ENCODE measurements at regions of chr12 and their contacts with region 1.

Region 1: GRCh38 chr12:10364815-10365622 is 24.8 kb downstream of the KLRK1 start:
- DNase-seq: peak in 7 of 9 experiments; percentile 40 to 93 (median 70)
- ATAC-seq: peak; percentile 66
- H3K4me3 ChIP-seq: peak overlapping the region; percentile 60 to 77
- H3K4me3 Mint-ChIP-seq: no peak overlapping the region
- H3K27ac ChIP-seq: peak overlapping the region; percentile 71 to 86
- H3K27ac Mint-ChIP-seq: no peak overlapping the region
- H3K4me1 ChIP-seq: peaks cover 83% of the 10 kb centered on the region
- H3K4me1 Mint-ChIP-seq: peaks cover 36% of the 10 kb centered on the region
- H3K27me3 ChIP-seq: no peaks in the 10 kb centered on the region
- H3K27me3 Mint-ChIP-seq: no peaks in the 10 kb centered on the region
- CTCF ChIP-seq: no peak

Region 2: DNA sequence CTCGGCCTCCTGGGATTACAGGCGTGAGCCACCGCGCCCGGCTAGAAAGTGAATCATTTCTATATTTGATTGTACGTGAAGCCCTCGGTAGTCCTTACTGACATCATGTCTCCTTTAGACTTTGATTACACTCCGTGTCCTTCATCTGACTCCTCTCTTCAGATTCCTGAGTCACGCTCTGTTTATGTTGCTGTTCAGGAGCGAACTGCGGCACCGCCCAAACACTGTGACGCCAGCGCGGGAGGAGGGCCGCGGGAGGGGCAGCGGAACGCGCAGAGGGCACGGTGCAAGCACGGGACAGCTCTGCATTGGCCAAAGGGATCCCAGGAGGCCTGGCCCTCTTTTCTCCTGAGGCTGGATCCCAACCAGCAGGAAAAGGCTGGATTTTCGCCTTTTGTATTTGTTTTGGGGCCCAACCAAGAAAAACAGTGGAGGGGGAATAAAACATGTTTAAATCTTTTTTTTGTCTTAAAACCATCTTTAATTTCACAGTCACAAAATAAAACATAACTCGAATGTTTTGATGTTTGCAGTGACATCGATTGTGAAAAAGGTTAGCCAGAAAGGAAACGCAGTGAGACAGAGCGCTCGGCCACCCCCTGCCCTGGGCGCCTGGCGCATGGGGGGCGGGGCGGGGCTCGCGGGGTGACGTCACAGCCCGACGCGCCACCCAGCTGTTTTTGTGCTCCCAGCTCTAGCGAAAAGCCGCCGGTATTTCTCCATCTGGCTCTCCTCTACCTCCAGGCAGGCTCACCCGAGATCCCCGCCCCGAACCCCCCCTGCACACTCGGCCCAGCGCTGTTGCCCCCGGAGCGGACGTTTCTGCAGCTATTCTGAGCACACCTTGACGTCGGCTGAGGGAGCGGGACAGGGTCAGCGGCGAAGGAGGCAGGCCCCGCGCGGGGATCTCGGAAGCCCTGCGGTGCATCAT is 152.6 kb before region 1 on chr12 and contains the start of gene GABARAPL1:
- CTCF ChIA-PET with region 1: no interaction called
- POLR2A ChIA-PET with region 1: interaction called, 3 read pairs
- intact Hi-C with region 1: loop called in 1 of 2 experiments (anchors 5 kb)
- DNase-seq: peak; percentile 76 to 94 (median 88)
- ATAC-seq: peak; percentile 69
- H3K4me3 ChIP-seq: peak within 1 kb of the TSS; percentile 75 to 93
- H3K4me3 Mint-ChIP-seq: peak within 1 kb of the TSS; percentile 91
- H3K27ac ChIP-seq: peak within 1 kb of the TSS; percentile 93 to 98
- H3K27ac Mint-ChIP-seq: peak within 1 kb of the TSS; percentile 97
- H3K4me1 ChIP-seq: peaks cover 19% of the 10 kb centered on the region
- H3K4me1 Mint-ChIP-seq: peaks cover 28% of the 10 kb centered on the region
- H3K27me3 ChIP-seq: no peaks in the 10 kb centered on the region
- H3K27me3 Mint-ChIP-seq: no peaks in the 10 kb centered on the region
- CTCF ChIP-seq: no peak
- total RNA-seq, gene GABARAPL1: 377 to 380 TPM

Region 3: DNA sequence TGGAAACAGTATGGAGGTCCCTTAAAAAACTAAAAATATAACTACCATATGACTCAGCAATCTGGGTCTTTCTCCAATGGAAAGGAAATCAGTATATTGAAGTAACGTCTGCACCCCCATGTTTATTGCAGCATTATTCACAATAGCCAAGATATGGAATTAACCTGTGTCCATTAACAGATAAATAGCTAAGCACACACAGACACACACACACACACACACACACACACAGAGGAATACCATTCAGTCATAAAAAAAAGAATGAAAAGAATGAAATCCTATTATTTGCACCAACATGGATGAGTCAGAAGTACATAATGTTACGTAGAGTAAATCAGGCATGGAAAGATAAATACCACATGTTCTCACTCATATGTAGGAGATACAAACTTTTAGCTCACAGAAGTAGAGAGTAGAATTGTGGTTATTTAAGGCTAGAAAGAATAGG is 20.2 kb after region 1 on chr12:
- CTCF ChIA-PET with region 1: interaction called, 19 read pairs
- POLR2A ChIA-PET with region 1: interaction called, 43 read pairs
- intact Hi-C with region 1: loop called (anchors 2 kb)
- DNase-seq: peak in 1 of 9 experiments; percentile 57
- ATAC-seq: peak; percentile 57
- H3K4me3 ChIP-seq: peak overlapping the region; percentile 61 to 68
- H3K4me3 Mint-ChIP-seq: peak overlapping the region; percentile 87
- H3K27ac ChIP-seq: peak overlapping the region; percentile 50 to 97
- H3K27ac Mint-ChIP-seq: peak overlapping the region; percentile 92
- H3K4me1 ChIP-seq: peaks cover 25% of the 10 kb centered on the region
- H3K4me1 Mint-ChIP-seq: peaks cover 58% of the 10 kb centered on the region
- H3K27me3 ChIP-seq: no peaks in the 10 kb centered on the region
- H3K27me3 Mint-ChIP-seq: no peaks in the 10 kb centered on the region
- CTCF ChIP-seq: no peak

Region 4: DNA sequence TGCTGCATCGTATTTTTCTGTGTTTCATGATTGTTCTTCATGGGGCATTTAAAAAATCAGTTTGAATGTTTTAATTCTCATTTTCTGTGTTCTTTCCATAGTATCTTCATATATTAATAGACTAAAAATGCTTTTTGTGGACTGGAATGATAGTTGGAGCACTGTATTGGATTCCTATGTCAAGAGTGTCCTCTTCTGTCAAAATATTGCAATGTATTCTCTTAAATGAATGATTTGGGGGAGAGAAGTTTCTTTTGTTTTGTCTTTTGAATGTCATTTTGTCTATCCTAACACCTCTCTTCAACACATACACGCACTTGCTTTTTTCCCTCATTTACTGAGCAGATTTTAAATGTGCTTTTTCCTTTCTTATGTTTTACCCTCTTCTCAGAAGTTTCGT is 136.0 kb after region 1 on chr12:
- CTCF ChIA-PET with region 1: interaction called, 9 read pairs
- POLR2A ChIA-PET with region 1: interaction called, 3 read pairs
- intact Hi-C with region 1: loop called in 1 of 2 experiments (anchors 2 kb)
- DNase-seq: peak in 2 of 9 experiments; percentile 36 to 59
- ATAC-seq: no peak
- H3K4me3 ChIP-seq: no peak overlapping the region
- H3K4me3 Mint-ChIP-seq: peak overlapping the region; percentile 57
- H3K27ac ChIP-seq: no peak overlapping the region
- H3K27ac Mint-ChIP-seq: peak overlapping the region; percentile 82
- H3K4me1 ChIP-seq: peaks cover 56% of the 10 kb centered on the region
- H3K4me1 Mint-ChIP-seq: peaks cover 51% of the 10 kb centered on the region
- H3K27me3 ChIP-seq: no peaks in the 10 kb centered on the region
- H3K27me3 Mint-ChIP-seq: no peaks in the 10 kb centered on the region
- CTCF ChIP-seq: no peak

Region 5: GRCh38 chr12:10521555-10521954 is 156.5 kb after region 1 on chr12:
- CTCF ChIA-PET with region 1: no interaction called
- POLR2A ChIA-PET with region 1: no interaction called
- intact Hi-C with region 1: no loop called
- DNase-seq: no peak
- ATAC-seq: no peak
- H3K4me3 ChIP-seq: no peak overlapping the region
- H3K4me3 Mint-ChIP-seq: no peak overlapping the region
- H3K27ac ChIP-seq: no peak overlapping the region
- H3K27ac Mint-ChIP-seq: no peak overlapping the region
- H3K4me1 ChIP-seq: no peaks in the 10 kb centered on the region
- H3K4me1 Mint-ChIP-seq: peaks cover 11% of the 10 kb centered on the region
- H3K27me3 ChIP-seq: no peaks in the 10 kb centered on the region
- H3K27me3 Mint-ChIP-seq: no peaks in the 10 kb centered on the region
- CTCF ChIP-seq: no peak

Region 6: DNA sequence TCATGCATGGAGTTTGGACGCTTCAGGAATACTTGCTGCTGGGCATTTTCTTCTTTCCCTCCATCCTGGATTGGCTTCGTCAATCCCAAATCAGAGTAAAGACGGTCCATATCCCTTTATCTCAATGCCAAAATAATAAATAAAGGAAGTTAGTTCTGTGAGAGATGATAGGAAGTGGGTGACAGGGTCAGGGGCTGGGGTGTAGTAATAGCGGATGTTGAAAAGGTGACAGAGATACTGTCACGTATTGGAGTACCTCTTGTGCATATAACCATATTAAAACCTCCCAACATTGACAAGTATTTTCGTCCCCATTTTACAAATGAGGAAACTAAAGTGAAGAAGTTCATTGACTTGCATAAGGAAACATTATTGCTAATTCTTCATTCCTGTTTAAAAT is 236.0 kb after region 1 on chr12:
- CTCF ChIA-PET with region 1: no interaction called
- POLR2A ChIA-PET with region 1: no interaction called
- intact Hi-C with region 1: no loop called
- DNase-seq: peak in 2 of 9 experiments; percentile 24 to 66
- ATAC-seq: peak; percentile 56
- H3K4me3 ChIP-seq: peak overlapping the region in 1 of 2 experiments; percentile 23
- H3K4me3 Mint-ChIP-seq: peak overlapping the region; percentile 23
- H3K27ac ChIP-seq: peak overlapping the region in 1 of 2 experiments; percentile 63
- H3K27ac Mint-ChIP-seq: peak overlapping the region; percentile 58
- H3K4me1 ChIP-seq: no peaks in the 10 kb centered on the region
- H3K4me1 Mint-ChIP-seq: peaks cover 21% of the 10 kb centered on the region
- H3K27me3 ChIP-seq: no peaks in the 10 kb centered on the region
- H3K27me3 Mint-ChIP-seq: no peaks in the 10 kb centered on the region
- CTCF ChIP-seq: no peak

Region 7: GRCh38 chr12:10613349-10614055 is 248.5 kb after region 1 on chr12 and contains the start of gene MAGOHB:
- CTCF ChIA-PET with region 1: interaction called, 5 read pairs
- POLR2A ChIA-PET with region 1: interaction called, 3 read pairs
- intact Hi-C with region 1: loop called (anchors 1 to 5 kb)
- DNase-seq: peak; percentile 97 to 100 (median 99)
- ATAC-seq: peak; percentile 90
- H3K4me3 ChIP-seq: peak within 1 kb of the TSS; percentile 74 to 97
- H3K4me3 Mint-ChIP-seq: peak within 1 kb of the TSS; percentile 100
- H3K27ac ChIP-seq: peak within 1 kb of the TSS; percentile 91 to 99
- H3K27ac Mint-ChIP-seq: peak within 1 kb of the TSS; percentile 100
- H3K4me1 ChIP-seq: peaks cover 19% of the 10 kb centered on the region
- H3K4me1 Mint-ChIP-seq: peaks cover 33% of the 10 kb centered on the region
- H3K27me3 ChIP-seq: no peaks in the 10 kb centered on the region
- H3K27me3 Mint-ChIP-seq: no peaks in the 10 kb centered on the region
- CTCF ChIP-seq: no peak
- total RNA-seq, gene MAGOHB: 7.9 to 8.5 TPM

Region 8: GRCh38 chr12:10749700-10750384 is 384.8 kb after region 1 on chr12:
- CTCF ChIA-PET with region 1: no interaction called
- POLR2A ChIA-PET with region 1: no interaction called
- intact Hi-C with region 1: loop called in 1 of 2 experiments (anchors 2 kb)
- DNase-seq: peak; percentile 43 to 89 (median 71)
- ATAC-seq: peak; percentile 100
- H3K4me3 ChIP-seq: peak overlapping the region in 1 of 2 experiments; percentile 21
- H3K4me3 Mint-ChIP-seq: peak overlapping the region; percentile 36
- H3K27ac ChIP-seq: no peak overlapping the region
- H3K27ac Mint-ChIP-seq: no peak overlapping the region
- H3K4me1 ChIP-seq: peaks cover 4% of the 10 kb centered on the region
- H3K4me1 Mint-ChIP-seq: peaks cover 6% of the 10 kb centered on the region
- H3K27me3 ChIP-seq: no peaks in the 10 kb centered on the region
- H3K27me3 Mint-ChIP-seq: peaks cover 25% of the 10 kb centered on the region
- CTCF ChIP-seq: peak; percentile 97